Left ventricle myocardium inferior (tissue), 1 donor: ENCODE measurements at regions of chr1 and their contacts with region 1.

Region 1: GRCh38 chr1:23403735-23404486 is 20.6 kb downstream of the TCEA3 start:
- DNase-seq: peak; percentile 88
- H3K4me3 ChIP-seq: peak overlapping the region; percentile 36
- H3K27ac ChIP-seq: peak overlapping the region; percentile 72
- H3K4me1 ChIP-seq: peaks cover 83% of the 10 kb centered on the region
- H3K27me3 ChIP-seq: no peaks in the 10 kb centered on the region
- CTCF ChIP-seq: peak; percentile 99

Region 2: DNA sequence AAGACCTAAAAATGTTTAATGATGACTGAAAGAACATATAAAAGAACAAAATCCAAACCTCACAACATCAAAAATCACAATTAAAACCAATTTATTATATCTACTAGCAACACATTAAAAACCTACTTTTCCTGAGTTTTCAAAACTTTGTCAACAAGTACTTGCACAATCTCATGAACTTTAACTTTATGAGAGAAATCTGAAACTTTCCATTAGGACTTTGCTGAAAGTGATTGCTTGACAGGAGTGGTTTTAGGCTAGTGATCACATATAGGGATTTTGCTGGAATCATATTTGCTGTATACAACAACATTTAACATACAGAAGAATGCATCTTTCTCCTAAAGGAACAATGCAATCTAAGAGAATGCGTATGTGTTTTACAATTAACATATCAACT is 73.1 kb before region 1 on chr1:
- intact Hi-C with region 1: no loop called
- DNase-seq: no peak
- H3K4me3 ChIP-seq: no peak overlapping the region
- H3K27ac ChIP-seq: no peak overlapping the region
- H3K4me1 ChIP-seq: no peaks in the 10 kb centered on the region
- H3K27me3 ChIP-seq: no peaks in the 10 kb centered on the region
- CTCF ChIP-seq: no peak

Region 3: DNA sequence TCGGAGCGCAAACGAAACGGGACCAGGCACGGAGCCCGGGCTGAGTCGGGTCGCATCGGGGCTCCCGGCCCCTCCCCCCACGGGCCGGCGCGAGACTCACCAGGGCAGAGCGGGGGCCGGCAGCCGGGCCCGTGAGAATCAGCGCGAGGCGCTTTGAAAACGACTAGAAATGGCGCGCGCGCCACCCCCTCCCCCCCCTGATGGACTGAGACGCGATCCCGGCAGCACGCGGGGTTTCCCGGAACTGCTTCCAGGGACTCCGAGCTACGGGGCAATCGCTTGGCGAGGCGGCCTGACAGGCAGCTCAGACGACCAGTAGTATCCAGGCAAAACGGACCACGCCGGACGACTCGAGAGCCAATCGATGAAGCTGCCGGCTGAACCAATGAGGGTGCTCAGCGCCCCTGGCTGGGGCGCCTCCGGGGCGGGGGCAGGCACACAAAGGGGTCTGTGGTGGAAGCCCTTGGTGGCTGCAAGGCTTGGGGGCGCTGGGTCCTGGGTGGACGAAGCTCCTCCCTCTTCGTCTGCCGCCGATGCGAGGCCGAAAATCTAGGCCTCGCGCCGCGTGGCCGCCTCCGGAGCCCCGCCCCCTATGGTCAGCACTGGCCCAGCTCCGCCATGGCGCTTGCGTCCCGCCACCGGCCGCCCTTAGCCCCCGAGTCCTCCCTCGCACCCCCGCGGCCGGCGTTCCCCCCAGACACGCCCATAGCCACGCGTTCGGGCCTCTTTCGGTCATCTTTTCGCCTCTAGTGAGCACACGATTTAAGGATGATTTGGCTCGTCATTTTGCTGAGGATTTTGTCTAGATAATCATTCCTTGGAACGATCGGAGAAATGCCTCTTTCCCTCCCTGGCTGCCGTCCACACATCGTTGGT is 59.6 kb before region 1 on chr1 and contains the start of gene HNRNPR:
- intact Hi-C with region 1: loop called (anchors 10 kb)
- DNase-seq: peak; percentile 100
- H3K4me3 ChIP-seq: peak within 1 kb of the TSS; percentile 96
- H3K27ac ChIP-seq: peak within 1 kb of the TSS; percentile 97
- H3K4me1 ChIP-seq: peaks cover 59% of the 10 kb centered on the region
- H3K27me3 ChIP-seq: no peaks in the 10 kb centered on the region
- CTCF ChIP-seq: no peak
- total RNA-seq, gene HNRNPR: 54.6 TPM

Region 4: GRCh38 chr1:23367791-23368561 is 35.9 kb before region 1 on chr1:
- intact Hi-C with region 1: no loop called
- DNase-seq: peak; percentile 99
- H3K4me3 ChIP-seq: peak overlapping the region; percentile 88
- H3K27ac ChIP-seq: peak overlapping the region; percentile 99
- H3K4me1 ChIP-seq: peaks cover 64% of the 10 kb centered on the region
- H3K27me3 ChIP-seq: no peaks in the 10 kb centered on the region
- CTCF ChIP-seq: peak; percentile 27